ENCODE measurements at regions of chr14 and their contacts with region 1.

Region 1: DNA sequence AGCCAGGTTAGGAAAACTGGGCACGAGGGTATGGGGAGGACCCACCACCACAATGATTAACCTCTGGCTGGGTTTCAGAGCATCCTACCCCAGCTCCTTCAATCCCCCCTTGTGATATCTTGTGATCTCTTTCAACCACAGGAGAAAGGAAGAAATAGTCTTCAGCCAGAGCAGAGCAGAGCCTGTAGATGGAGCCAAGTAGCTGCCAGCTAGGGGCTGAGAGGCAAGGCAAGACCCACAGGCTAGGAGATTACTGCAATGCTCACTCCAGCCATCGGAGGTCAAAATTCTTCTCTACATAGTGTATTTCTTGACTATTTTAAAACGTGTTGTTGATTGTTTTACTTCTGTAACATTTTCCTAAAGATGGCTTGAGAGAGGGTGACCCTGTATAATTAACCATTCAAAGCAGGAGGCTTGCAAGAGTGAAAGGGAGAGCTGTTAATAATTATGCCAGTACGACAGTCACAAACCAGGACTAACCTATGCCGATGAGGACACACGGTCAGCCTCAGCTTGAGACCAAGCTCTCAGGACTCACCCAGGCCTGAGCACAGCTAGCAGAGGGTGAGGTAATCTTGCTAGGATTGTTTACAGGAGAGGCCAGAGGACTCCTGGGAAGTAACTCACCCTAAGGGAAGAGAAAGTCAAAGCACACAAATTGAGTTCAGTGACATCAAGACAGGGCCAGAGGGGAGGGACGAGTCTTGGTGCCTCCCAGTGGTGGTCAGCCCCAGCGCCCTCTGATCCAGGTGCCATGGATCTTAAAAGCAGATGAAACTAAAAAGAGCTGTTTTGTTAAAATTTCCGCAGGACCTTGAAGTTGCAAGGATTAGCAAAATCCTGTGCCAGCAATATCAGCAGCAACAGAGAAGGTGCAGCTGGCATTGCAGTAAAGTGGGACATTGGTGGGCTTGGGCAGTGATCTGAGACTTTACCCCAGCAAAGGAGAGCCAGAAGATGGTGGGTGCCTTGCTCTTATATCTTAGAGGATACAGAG is 29.8 kb upstream of the CDKN3 start:
- DNase-seq: no peak
- H3K4me3 ChIP-seq: no peak overlapping the region
- H3K27me3 ChIP-seq: no peaks in the 10 kb centered on the region
- CTCF ChIP-seq: peak; percentile 78

Region 2: GRCh38 chr14:54347997-54348611 is 18.9 kb before region 1 on chr14:
- CTCF ChIA-PET with region 1: interaction called, 15 read pairs
- POLR2A ChIA-PET with region 1: no interaction called
- DNase-seq: no peak
- H3K4me3 ChIP-seq: no peak overlapping the region
- H3K27me3 ChIP-seq: no peaks in the 10 kb centered on the region
- CTCF ChIP-seq: peak; percentile 68

Region 3: DNA sequence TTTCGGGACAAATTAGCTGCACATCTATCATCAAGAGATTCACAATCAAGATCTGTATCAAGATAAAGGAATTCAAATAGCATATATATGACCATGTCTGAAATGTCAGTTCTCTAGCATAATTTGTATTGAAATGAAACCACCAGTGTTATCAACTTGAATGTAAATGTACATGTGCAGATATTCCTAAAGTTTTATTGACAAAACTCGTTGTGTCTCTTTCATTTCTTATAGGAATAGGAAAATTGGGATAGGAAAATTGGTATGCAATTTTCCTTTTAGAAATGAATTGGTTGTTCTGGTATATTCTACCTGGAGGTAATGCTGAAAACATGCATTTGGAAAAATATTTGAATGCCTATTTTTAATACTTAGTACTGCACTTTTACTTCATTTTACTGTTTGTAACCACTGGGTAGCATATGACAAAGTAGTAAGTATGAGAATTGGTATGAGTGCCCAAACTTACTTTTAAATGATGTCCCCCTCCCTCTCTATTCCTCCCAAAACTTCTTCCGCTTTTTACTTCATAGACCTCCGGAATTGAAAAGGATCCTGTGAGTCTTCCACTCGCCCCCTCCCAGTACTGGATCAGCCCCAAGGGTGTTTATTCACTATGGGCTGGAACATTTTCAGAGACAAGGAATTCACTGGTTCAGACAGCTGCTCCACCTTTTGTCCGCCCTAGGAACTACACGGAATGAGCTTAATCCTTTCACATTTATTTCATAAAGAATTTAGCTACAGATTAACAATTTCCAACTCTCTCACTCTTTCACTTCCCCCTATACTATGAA is 53.2 kb after region 1 on chr14:
- CTCF ChIA-PET with region 1: interaction called, 14 read pairs
- POLR2A ChIA-PET with region 1: no interaction called
- DNase-seq: no peak
- H3K4me3 ChIP-seq: no peak overlapping the region
- H3K27me3 ChIP-seq: no peaks in the 10 kb centered on the region
- CTCF ChIP-seq: peak; percentile 71

Region 4: DNA sequence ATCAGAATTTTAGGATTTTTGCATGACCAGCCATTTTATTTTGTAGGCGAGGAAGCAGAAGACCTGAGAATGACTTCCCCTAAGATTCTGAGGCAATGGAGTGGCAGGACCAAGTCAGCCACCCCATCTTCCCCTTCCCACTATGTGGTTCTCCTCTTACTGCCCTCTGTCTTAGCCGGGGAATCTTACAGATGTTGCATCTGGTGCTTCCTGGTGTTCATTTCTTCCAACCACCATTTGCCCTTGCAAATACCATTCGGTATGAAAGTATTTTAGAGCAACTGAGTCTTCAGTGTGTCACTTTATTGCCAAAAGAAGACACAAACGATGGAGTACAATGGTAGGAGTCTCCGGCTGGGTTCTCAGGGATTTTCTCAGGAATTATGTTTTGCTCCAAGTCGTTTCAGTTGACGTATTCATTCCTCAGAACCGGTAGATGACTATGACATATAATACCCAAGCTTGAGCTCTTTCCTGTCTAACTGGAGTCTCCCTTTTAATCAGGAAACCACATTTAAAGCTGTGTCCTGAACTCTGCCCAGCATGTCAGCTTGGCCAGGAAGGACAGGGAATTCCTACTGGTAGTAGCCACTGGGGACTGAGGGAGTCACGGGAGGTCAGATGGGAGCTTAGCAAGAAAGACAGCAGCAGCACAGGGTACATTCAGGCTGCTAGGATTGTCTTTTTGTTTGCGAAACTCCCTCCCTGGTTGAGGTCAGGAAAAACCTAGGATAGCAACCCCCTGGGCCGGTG is 286.9 kb after region 1 on chr14:
- CTCF ChIA-PET with region 1: no interaction called
- POLR2A ChIA-PET with region 1: no interaction called
- DNase-seq: no peak
- H3K4me3 ChIP-seq: no peak overlapping the region
- H3K27me3 ChIP-seq: no peaks in the 10 kb centered on the region
- CTCF ChIP-seq: no peak

Measured in BJ (cell line).